ENCODE measurements at regions of chr7 and their contacts with region 1.

Region 1: GRCh38 chr7:140517546-140518369 is 38.5 kb upstream of the MKRN1 start:
- DNase-seq: no peak
- H3K4me3 ChIP-seq: no peak overlapping the region
- H3K27ac ChIP-seq: peak overlapping the region in 3 of 4 donors; percentile 17 to 68 (median 62)
- H3K4me1 ChIP-seq: peaks cover 0 to 22% (median 10%) of the 10 kb centered on the region in 3 donors
- H3K27me3 ChIP-seq: no peaks in the 10 kb centered on the region
- CTCF ChIP-seq: peak; percentile 50 to 86 (median 84)
- POLR2A ChIP-seq: no peak

Region 2: DNA sequence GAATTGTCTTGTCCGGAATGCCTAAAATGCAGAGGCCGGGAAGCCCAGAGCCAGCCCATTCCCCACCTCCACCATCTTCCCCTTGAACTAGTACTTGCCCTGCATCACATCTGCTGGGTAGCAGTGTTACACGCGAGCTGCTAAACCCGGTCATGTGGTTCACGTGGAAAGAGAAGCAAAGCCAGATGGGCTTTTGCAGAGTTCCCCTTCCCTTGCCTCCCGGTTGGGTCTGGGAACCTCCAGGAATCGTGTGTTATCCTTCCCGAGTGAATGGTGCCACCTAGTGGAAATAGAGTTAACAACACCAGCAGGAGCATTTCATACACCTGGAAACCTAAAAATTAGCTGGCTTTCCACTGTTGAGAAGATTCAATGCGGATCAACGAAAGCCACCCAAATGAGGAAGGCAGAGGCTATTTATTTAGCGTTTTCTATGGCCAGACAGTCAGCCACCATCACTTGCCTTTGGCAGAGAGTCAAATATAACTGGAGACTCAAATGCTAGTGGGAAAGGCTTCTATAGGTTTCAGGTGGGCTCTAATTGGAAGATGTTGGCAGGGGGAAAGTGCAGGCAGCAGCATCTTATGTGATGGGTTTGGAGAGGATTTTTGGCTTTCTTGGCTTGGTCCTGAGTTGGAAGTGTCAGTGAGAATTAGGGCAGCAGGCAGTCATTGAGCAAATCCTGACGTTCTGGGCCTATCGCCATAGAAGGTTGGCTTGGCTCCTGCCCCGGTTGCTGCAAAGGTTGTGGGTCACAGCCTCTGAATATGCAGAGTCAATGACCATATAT is 135.8 kb after region 1 on chr7:
- intact Hi-C with region 1: loop called (anchors 2 kb)
- DNase-seq: no peak
- H3K4me3 ChIP-seq: no peak overlapping the region
- H3K27ac ChIP-seq: no peak overlapping the region
- H3K4me1 ChIP-seq: peaks cover 0 to 41% (median 22%) of the 10 kb centered on the region in 3 donors
- H3K27me3 ChIP-seq: no peaks in the 10 kb centered on the region
- CTCF ChIP-seq: peak; percentile 46 to 93 (median 82)
- POLR2A ChIP-seq: no peak

Region 3: GRCh38 chr7:140876519-140877248 is 358.9 kb after region 1 on chr7:
- intact Hi-C with region 1: no loop called
- DNase-seq: no peak
- H3K4me3 ChIP-seq: no peak overlapping the region
- H3K27ac ChIP-seq: no peak overlapping the region
- H3K4me1 ChIP-seq: peaks cover 0 to 16% (median 5%) of the 10 kb centered on the region in 3 donors
- H3K27me3 ChIP-seq: no peaks in the 10 kb centered on the region
- CTCF ChIP-seq: no peak
- POLR2A ChIP-seq: no peak

Measured in esophagus squamous epithelium (tissue), 5 donors.